ENCODE measurements at regions of chr1 and their contacts with region 1.

Region 1: GRCh38 chr1:87084244-87084836 is 169.9 kb downstream of the HS2ST1 start:
- DNase-seq: no peak
- H3K4me3 Mint-ChIP-seq: no peak overlapping the region
- H3K27ac Mint-ChIP-seq: no peak overlapping the region
- H3K4me1 Mint-ChIP-seq: peaks cover 8% of the 10 kb centered on the region
- H3K27me3 Mint-ChIP-seq: no peaks in the 10 kb centered on the region

Region 2: GRCh38 chr1:86826856-86827255 is 257.5 kb before region 1 on chr1:
- CTCF ChIA-PET with region 1: interaction called, 111 read pairs
- POLR2A ChIA-PET with region 1: no interaction called
- intact Hi-C with region 1: no loop called
- DNase-seq: no peak
- H3K4me3 Mint-ChIP-seq: no peak overlapping the region
- H3K27ac Mint-ChIP-seq: no peak overlapping the region
- H3K4me1 Mint-ChIP-seq: no peaks in the 10 kb centered on the region
- H3K27me3 Mint-ChIP-seq: peaks cover 2% of the 10 kb centered on the region

Region 3: GRCh38 chr1:86833461-86834215 is 250.7 kb before region 1 on chr1:
- CTCF ChIA-PET with region 1: interaction called, 111 read pairs
- POLR2A ChIA-PET with region 1: no interaction called
- intact Hi-C with region 1: loop called (anchors 1 kb)
- DNase-seq: peak; percentile 62
- H3K4me3 Mint-ChIP-seq: no peak overlapping the region
- H3K27ac Mint-ChIP-seq: no peak overlapping the region
- H3K4me1 Mint-ChIP-seq: peaks cover 5% of the 10 kb centered on the region
- H3K27me3 Mint-ChIP-seq: peaks cover 2% of the 10 kb centered on the region

Region 4: GRCh38 chr1:86965012-86965826 is 119.1 kb before region 1 on chr1:
- CTCF ChIA-PET with region 1: interaction called, 6 read pairs
- POLR2A ChIA-PET with region 1: no interaction called
- intact Hi-C with region 1: loop called (anchors 5 kb)
- DNase-seq: no peak
- H3K4me3 Mint-ChIP-seq: no peak overlapping the region
- H3K27ac Mint-ChIP-seq: no peak overlapping the region
- H3K4me1 Mint-ChIP-seq: no peaks in the 10 kb centered on the region
- H3K27me3 Mint-ChIP-seq: no peaks in the 10 kb centered on the region

Region 5: GRCh38 chr1:87100271-87100670 is 15.9 kb after region 1 on chr1:
- CTCF ChIA-PET with region 1: interaction called, 31 read pairs
- POLR2A ChIA-PET with region 1: no interaction called
- intact Hi-C with region 1: no loop called
- DNase-seq: no peak
- H3K4me3 Mint-ChIP-seq: no peak overlapping the region
- H3K27ac Mint-ChIP-seq: no peak overlapping the region
- H3K4me1 Mint-ChIP-seq: no peaks in the 10 kb centered on the region
- H3K27me3 Mint-ChIP-seq: no peaks in the 10 kb centered on the region

Region 6: GRCh38 chr1:87131809-87132283 is 47.5 kb after region 1 on chr1:
- CTCF ChIA-PET with region 1: no interaction called
- POLR2A ChIA-PET with region 1: no interaction called
- intact Hi-C with region 1: loop called (anchors 5 kb)
- DNase-seq: peak; percentile 79
- H3K4me3 Mint-ChIP-seq: peak overlapping the region; percentile 70
- H3K27ac Mint-ChIP-seq: no peak overlapping the region
- H3K4me1 Mint-ChIP-seq: peaks cover 10% of the 10 kb centered on the region
- H3K27me3 Mint-ChIP-seq: peaks cover 32% of the 10 kb centered on the region

Measured in activated CD4-positive, alpha-beta memory T cell treated with anti-CD3 and anti-CD28 coated beads for 36 hours (primary cell).